Mammary epithelial cell (primary cell): ENCODE measurements at regions of chr2 and their contacts with region 1.

Region 1: DNA sequence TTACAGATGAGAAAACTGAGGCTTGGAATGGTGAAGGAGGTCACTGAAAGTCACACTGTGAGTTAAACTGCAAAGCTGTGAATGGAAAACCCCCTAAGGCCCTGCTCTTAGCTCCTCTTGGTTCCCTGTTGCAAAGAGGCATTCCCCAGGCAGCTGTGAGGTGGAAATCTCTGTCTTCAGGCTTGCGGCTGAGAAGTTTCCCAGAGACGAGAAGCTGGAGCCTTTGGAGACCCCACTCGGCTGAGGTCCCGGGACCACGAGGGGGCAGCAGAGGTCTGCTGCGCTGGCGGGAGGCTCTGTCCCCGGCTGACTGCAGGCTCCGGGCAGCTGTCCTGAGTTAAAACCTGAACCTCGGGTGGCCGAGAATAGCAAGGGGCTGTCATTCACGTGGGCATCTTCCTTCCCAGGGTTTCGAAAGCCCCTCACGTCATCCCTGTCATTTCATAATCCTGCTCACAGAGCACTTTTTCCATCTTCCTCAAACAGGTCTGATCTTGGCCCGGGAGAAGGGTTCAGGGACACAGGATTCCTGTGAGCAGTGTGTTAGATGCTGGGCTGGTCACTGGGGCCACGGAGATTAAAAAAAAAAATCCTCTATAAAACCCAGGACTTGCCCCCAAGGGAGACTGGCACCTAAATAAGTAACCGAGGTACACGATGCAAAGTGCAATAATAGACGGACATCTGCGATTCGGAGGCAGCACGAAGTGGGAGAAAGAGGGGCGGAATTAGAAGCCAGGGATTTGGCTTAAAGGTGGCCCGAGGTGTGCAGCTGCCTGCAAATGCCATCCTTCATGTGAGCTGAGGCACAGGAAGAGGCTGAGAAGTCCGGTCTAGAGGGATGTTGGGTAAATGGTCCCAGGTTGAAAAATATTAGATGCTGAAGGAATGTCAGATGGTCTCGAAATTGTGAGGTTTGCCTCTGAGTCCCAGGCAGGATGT is 24.6 kb upstream of the ATOH8 start:
- DNase-seq: peak; percentile 45
- H3K4me3 ChIP-seq: no peak overlapping the region
- H3K27ac ChIP-seq: no peak overlapping the region
- H3K4me1 ChIP-seq: no peaks in the 10 kb centered on the region
- H3K27me3 ChIP-seq: peaks cover 5% of the 10 kb centered on the region
- CTCF ChIP-seq: peak; percentile 82 to 98

Region 2: GRCh38 chr2:85485815-85486214 is 243.3 kb before region 1 on chr2:
- CTCF ChIA-PET with region 1: no interaction called
- dilution Hi-C with region 1: no loop called
- in situ Hi-C with region 1: no loop called
- intact Hi-C with region 1: no loop called
- DNase-seq: no peak
- H3K4me3 ChIP-seq: no peak overlapping the region
- H3K27ac ChIP-seq: no peak overlapping the region
- H3K4me1 ChIP-seq: no peaks in the 10 kb centered on the region
- H3K27me3 ChIP-seq: no peaks in the 10 kb centered on the region
- CTCF ChIP-seq: no peak

Region 3: DNA sequence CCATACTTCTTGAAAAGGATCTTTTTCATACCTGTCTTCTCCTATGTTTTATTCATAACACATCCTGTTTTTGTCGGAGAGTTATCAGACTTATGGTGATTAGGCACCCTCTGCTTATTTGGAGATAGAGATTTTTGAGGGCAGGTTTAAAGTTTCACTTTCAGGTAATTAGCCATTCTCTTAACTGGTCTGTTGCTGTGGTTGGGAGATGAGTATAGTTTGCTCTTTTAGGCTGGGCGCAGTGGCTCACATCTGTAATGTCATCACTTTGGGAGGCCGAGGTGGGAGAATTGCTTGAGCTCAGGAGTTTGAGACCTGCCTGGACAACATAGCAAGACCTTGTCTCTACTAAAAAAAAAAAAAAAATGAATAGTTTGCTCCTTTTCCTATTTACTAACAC is 86.4 kb before region 1 on chr2:
- CTCF ChIA-PET with region 1: no interaction called
- dilution Hi-C with region 1: no loop called
- in situ Hi-C with region 1: no loop called
- intact Hi-C with region 1: loop called (anchors 1 kb)
- DNase-seq: no peak
- H3K4me3 ChIP-seq: no peak overlapping the region
- H3K27ac ChIP-seq: no peak overlapping the region
- H3K4me1 ChIP-seq: no peaks in the 10 kb centered on the region
- H3K27me3 ChIP-seq: no peaks in the 10 kb centered on the region
- CTCF ChIP-seq: no peak

Region 4: GRCh38 chr2:85678794-85679672 is 50.1 kb before region 1 on chr2:
- CTCF ChIA-PET with region 1: interaction called, 6 read pairs
- dilution Hi-C with region 1: no loop called
- in situ Hi-C with region 1: no loop called
- intact Hi-C with region 1: loop called (anchors 1 kb)
- DNase-seq: peak; percentile 71
- H3K4me3 ChIP-seq: peak overlapping the region in 1 of 3 experiments; percentile 25
- H3K27ac ChIP-seq: no peak overlapping the region
- H3K4me1 ChIP-seq: peaks cover 12% of the 10 kb centered on the region
- H3K27me3 ChIP-seq: no peaks in the 10 kb centered on the region
- CTCF ChIP-seq: peak; percentile 95 to 99

Region 5: GRCh38 chr2:85750587-85751575 is 21.7 kb after region 1 on chr2:
- CTCF ChIA-PET with region 1: no interaction called
- dilution Hi-C with region 1: no loop called
- in situ Hi-C with region 1: no loop called
- intact Hi-C with region 1: loop called (anchors 1 kb)
- DNase-seq: peak; percentile 28
- H3K4me3 ChIP-seq: no peak overlapping the region
- H3K27ac ChIP-seq: no peak overlapping the region
- H3K4me1 ChIP-seq: peaks cover 12% of the 10 kb centered on the region
- H3K27me3 ChIP-seq: peaks cover 40% of the 10 kb centered on the region
- CTCF ChIP-seq: peak; percentile 90 to 95

Region 6: DNA sequence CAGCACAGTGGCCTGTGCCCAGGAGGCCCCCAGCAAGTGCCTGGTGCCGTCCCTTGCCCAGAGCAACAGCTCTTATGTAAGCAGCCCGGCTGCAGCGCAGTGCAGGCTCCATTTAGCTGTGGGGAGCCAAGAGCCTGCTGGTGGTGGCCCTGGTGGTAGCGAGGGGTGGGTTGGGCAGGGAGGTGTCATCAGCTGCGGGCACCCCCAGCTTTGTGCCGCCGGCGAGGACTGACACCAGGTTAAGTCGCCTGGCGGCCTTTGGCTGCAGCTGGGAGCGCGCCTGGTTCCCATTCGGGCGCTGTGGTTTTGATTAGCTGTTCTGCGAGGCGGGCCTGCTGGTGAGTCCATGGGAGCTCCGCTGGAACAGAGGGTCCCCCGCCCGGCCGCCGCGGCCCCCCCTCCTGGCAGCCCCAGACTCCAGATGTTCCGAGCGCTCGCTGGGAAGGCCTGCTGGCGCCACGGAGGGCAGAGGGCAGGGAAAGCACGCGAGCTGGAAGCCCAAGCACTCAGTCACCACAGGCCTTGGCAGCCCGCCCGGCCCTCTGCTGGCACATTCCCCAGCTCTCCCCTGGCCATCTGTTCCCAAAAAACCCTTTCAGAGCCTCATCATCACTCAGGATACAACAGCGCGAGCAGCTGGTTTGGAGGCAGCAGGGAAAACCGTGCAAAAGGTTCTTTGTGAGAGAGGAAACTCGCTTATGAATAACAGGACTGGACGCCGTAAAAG is 43.0 kb after region 1 on chr2:
- CTCF ChIA-PET with region 1: no interaction called
- dilution Hi-C with region 1: no loop called
- in situ Hi-C with region 1: no loop called
- intact Hi-C with region 1: loop called (anchors 1 kb)
- DNase-seq: peak; percentile 93
- H3K4me3 ChIP-seq: no peak overlapping the region
- H3K27ac ChIP-seq: no peak overlapping the region
- H3K4me1 ChIP-seq: peaks cover 18% of the 10 kb centered on the region
- H3K27me3 ChIP-seq: peaks cover 9% of the 10 kb centered on the region
- CTCF ChIP-seq: peak; percentile 40 to 56

Region 7: GRCh38 chr2:86079981-86080911 is 351.1 kb after region 1 on chr2:
- CTCF ChIA-PET with region 1: no interaction called
- dilution Hi-C with region 1: no loop called
- in situ Hi-C with region 1: no loop called
- intact Hi-C with region 1: loop called (anchors 5 kb)
- DNase-seq: peak; percentile 30
- H3K4me3 ChIP-seq: no peak overlapping the region
- H3K27ac ChIP-seq: no peak overlapping the region
- H3K4me1 ChIP-seq: no peaks in the 10 kb centered on the region
- H3K27me3 ChIP-seq: no peaks in the 10 kb centered on the region
- CTCF ChIP-seq: peak; percentile 70 to 89